PC-9 (cell line): ENCODE measurements at regions of chr6 and their contacts with region 1.

Region 1: DNA sequence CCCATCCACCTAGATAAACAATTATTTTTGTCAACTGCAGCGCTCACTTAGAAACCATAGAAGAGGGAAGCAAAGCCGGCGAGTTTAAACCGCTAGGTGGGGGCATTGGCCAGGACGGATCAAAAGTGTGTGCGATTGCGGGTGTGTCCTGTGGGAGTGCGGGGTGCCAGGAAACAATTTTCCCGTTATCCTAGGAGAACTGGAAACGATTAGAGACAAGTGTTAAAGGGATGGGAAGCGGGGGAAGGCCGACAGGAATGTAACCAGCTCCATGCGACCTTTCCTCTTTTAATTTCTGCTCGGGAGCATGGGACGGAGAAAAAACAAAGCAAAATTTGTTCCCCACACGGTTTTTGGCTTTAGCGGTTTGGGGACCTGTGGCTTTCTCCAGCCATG is 2.8 kb upstream of the HTR1B start:
- DNase-seq: peak in 1 of 2 experiments; percentile 36
- H3K4me3 ChIP-seq: no peak overlapping the region
- H3K27ac ChIP-seq: no peak overlapping the region
- H3K4me1 ChIP-seq: no peaks in the 10 kb centered on the region
- H3K27me3 ChIP-seq: peaks cover 11% of the 10 kb centered on the region; the same call in 1 of the 2 replicates
- CTCF ChIP-seq: no peak

Region 2: DNA sequence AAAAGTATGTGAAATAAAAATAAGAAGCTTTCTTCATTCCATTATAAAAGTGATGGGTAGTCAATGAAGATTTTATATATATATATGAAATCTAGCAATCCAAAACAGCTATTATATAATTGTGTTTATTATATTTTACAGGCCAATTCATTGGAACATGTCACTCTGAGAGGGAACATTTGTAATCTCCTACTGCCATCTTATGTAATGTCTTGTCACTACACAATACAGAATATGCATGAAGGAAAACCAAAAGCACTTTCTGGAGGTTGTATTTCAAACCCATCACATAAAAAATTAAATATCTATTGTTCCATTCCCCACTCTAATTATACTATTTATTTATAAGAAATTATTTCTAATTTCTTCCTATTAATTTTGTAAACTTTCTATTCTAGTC is 1369.8 kb after region 1 on chr6:
- CTCF ChIA-PET with region 1: no interaction called
- POLR2A ChIA-PET with region 1: no interaction called
- intact Hi-C with region 1: loop called (anchors 10 kb)
- DNase-seq: no peak
- H3K4me3 ChIP-seq: no peak overlapping the region
- H3K27ac ChIP-seq: no peak overlapping the region
- H3K4me1 ChIP-seq: no peaks in the 10 kb centered on the region
- H3K27me3 ChIP-seq: no peaks in the 10 kb centered on the region
- CTCF ChIP-seq: no peak